ENCODE measurements at regions of chr10 and their contacts with region 1.

Region 1: DNA sequence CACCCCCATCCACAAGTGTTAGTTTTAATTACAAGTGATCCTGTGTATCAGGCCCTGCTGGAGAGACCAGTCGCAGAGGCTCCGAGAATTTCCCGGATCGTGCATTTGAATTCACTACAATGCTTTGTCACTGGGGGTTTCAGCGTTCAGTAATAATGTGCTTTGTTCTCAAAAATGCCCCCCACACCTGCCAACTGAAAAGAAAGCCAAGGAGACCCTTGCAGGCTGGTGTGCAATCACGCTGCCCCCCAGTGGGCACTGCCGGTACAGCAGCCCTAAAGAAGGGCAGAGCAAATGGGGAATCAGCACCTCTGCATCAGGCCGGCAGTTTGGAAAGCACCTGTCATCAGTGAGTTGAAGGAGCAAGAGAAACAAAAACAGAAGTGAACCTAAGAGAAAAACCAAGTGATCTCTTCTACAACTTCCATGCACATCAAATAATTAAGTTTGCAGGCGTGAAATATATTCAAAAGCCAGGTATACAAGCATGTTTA is 177.6 kb downstream of the PARD3 start:
- DNase-seq: peak; percentile 76
- H3K4me3 ChIP-seq: peak overlapping the region; percentile 10
- H3K27ac ChIP-seq: no peak overlapping the region
- H3K4me1 ChIP-seq: peaks cover 16% of the 10 kb centered on the region
- H3K27me3 ChIP-seq: no peaks in the 10 kb centered on the region
- CTCF ChIP-seq: peak; percentile 99

Region 2: DNA sequence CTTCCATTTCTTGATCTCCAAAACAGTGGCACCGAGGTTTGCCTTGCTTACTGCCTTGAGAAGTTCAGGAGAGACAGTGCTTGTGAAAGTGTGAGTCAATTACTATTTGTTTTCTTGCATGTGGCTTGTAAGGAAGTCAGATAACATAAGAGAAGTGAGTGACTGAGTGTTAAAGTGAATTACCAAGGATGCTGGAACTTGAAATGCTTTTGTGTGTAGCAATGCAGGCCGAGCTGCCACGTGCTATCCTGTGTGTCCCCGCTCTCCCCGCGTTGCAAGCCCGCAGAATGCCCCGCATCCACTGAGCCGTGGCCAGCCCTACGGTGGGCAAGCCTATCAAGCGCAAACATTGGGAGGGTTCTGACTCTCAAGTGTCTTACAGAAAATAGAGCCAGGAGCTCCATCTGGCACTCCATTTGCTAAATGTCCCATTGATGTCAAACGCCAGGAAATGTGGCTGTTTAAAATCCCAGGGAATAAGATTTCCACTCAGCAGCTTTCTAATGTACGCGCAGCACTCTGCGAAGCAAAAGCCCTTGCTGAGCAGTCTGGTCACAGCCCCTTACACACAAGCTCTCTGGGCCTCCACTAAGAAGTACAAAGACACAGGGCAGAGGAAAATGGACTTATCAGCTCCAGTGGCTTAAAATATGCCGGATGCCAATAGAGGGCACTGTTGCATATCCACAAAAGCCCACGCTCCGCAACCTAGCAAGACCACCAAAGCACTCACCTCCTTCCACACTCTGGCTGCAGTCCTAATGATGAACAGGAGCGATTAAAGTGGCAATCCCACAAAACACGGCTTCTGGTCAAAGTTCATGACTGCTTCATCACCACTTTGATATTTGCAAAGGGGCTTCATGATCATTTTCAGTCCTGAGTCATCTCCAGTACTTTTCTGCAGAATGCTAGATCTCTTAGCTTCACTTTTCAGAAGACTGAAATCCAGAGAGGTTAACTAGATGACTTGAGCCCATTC is 1521.4 kb before region 1 on chr10:
- CTCF ChIA-PET with region 1: no interaction called
- POLR2A ChIA-PET with region 1: no interaction called
- intact Hi-C with region 1: loop called (anchors 5 kb)
- DNase-seq: peak; percentile 82
- H3K4me3 ChIP-seq: no peak overlapping the region
- H3K27ac ChIP-seq: no peak overlapping the region
- H3K4me1 ChIP-seq: peaks cover 14% of the 10 kb centered on the region
- H3K27me3 ChIP-seq: no peaks in the 10 kb centered on the region
- CTCF ChIP-seq: peak; percentile 87

Region 3: GRCh38 chr10:33193057-33193700 is 1444.3 kb before region 1 on chr10:
- CTCF ChIA-PET with region 1: no interaction called
- POLR2A ChIA-PET with region 1: no interaction called
- intact Hi-C with region 1: loop called (anchors 2 kb)
- DNase-seq: peak; percentile 93
- H3K4me3 ChIP-seq: no peak overlapping the region
- H3K27ac ChIP-seq: no peak overlapping the region
- H3K4me1 ChIP-seq: peaks cover 67% of the 10 kb centered on the region
- H3K27me3 ChIP-seq: no peaks in the 10 kb centered on the region
- CTCF ChIP-seq: peak; percentile 93

Region 4: GRCh38 chr10:33927347-33927746 is 710.1 kb before region 1 on chr10:
- CTCF ChIA-PET with region 1: interaction called, 3 read pairs
- POLR2A ChIA-PET with region 1: no interaction called
- intact Hi-C with region 1: loop called (anchors 2 kb)
- DNase-seq: peak; percentile 56
- H3K4me3 ChIP-seq: no peak overlapping the region
- H3K27ac ChIP-seq: peak overlapping the region; percentile 35
- H3K4me1 ChIP-seq: peaks cover 44% of the 10 kb centered on the region
- H3K27me3 ChIP-seq: no peaks in the 10 kb centered on the region
- CTCF ChIP-seq: no peak

Region 5: GRCh38 chr10:34223658-34224057 is 413.8 kb before region 1 on chr10:
- CTCF ChIA-PET with region 1: no interaction called
- POLR2A ChIA-PET with region 1: no interaction called
- intact Hi-C with region 1: loop called (anchors 10 kb)
- DNase-seq: no peak
- H3K4me3 ChIP-seq: no peak overlapping the region
- H3K27ac ChIP-seq: no peak overlapping the region
- H3K4me1 ChIP-seq: no peaks in the 10 kb centered on the region
- H3K27me3 ChIP-seq: no peaks in the 10 kb centered on the region
- CTCF ChIP-seq: 0 out of 2 replicates have a peak, but pooled peaks have one; percentile 31

Region 6: DNA sequence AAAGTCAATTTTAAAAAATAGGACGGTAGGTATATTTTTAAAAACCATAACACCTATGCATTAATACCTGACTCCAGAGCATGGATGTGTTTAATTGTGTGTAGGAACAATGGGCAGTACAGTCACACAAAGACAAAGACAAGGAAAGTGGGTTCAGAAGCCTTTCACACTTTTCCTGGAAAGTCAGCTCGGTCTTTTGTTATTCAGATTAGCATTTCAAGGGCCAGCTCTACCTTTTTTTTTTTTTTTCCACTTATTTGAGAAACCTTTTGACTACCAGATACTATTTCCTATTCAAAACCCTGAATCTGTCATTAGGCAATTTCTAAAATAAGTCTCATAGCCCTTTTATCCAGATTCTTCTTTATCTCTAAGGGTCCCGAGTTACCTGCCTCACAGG is 224.3 kb before region 1 on chr10:
- CTCF ChIA-PET with region 1: no interaction called
- POLR2A ChIA-PET with region 1: no interaction called
- intact Hi-C with region 1: loop called (anchors 10 kb)
- DNase-seq: no peak
- H3K4me3 ChIP-seq: no peak overlapping the region
- H3K27ac ChIP-seq: no peak overlapping the region
- H3K4me1 ChIP-seq: no peaks in the 10 kb centered on the region
- H3K27me3 ChIP-seq: no peaks in the 10 kb centered on the region
- CTCF ChIP-seq: no peak

Region 7: GRCh38 chr10:34526758-34527730 is 110.4 kb before region 1 on chr10:
- CTCF ChIA-PET with region 1: interaction called, 9 read pairs
- POLR2A ChIA-PET with region 1: no interaction called
- intact Hi-C with region 1: loop called (anchors 1 kb)
- DNase-seq: peak; percentile 87
- H3K4me3 ChIP-seq: no peak overlapping the region
- H3K27ac ChIP-seq: peak overlapping the region; percentile 60
- H3K4me1 ChIP-seq: peaks cover 30% of the 10 kb centered on the region
- H3K27me3 ChIP-seq: no peaks in the 10 kb centered on the region
- CTCF ChIP-seq: peak; percentile 42

Region 8: GRCh38 chr10:34758447-34758996 is 121.1 kb after region 1 on chr10:
- CTCF ChIA-PET with region 1: no interaction called
- POLR2A ChIA-PET with region 1: no interaction called
- intact Hi-C with region 1: no loop called
- DNase-seq: peak; percentile 84
- H3K4me3 ChIP-seq: no peak overlapping the region
- H3K27ac ChIP-seq: no peak overlapping the region
- H3K4me1 ChIP-seq: peaks cover 16% of the 10 kb centered on the region
- H3K27me3 ChIP-seq: no peaks in the 10 kb centered on the region
- CTCF ChIP-seq: no peak